Activated T-helper 2 cell treated with anti-CD3 and anti-CD28 coated beads, Interferon-gamma antibody, Interleukin-2, Interleukin-4, amounts not matched to agents 10 μg/mL and 5 μg/mL and 100 μg/mL, durations not matched to agents 14 hours and 24 hours and 36 hours (primary cell): ENCODE measurements at regions of chr11 and their contacts with region 1.

Region 1: GRCh38 chr11:95337175-95337957 is 106.4 kb upstream of the SESN3 start:
- DNase-seq: peak; percentile 46
- H3K4me3 Mint-ChIP-seq: no peak overlapping the region
- H3K27ac Mint-ChIP-seq: no peak overlapping the region
- H3K4me1 Mint-ChIP-seq: peaks cover 15% of the 10 kb centered on the region
- H3K27me3 Mint-ChIP-seq: peaks cover 2% of the 10 kb centered on the region

Region 2: DNA sequence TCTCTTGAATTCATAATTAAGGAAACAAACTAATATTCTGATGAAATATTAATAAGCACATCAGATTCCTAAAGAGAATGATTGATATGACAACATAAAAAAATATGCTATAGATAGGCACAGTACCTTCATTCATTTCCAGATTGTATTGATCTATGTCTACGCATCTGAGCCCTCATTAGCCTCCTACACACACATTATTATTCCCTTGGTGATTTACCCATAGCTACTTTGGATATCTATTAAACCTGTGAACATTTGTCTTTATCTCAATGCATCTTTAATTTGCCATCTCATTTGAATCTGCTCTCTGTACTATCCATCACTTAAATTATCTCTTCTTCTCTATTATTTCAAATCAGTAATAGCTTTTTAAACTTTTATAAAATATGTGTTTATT is 124.8 kb before region 1 on chr11:
- intact Hi-C with region 1: no loop called
- DNase-seq: no peak
- H3K4me3 Mint-ChIP-seq: no peak overlapping the region
- H3K27ac Mint-ChIP-seq: no peak overlapping the region
- H3K4me1 Mint-ChIP-seq: no peaks in the 10 kb centered on the region
- H3K27me3 Mint-ChIP-seq: no peaks in the 10 kb centered on the region

Region 3: DNA sequence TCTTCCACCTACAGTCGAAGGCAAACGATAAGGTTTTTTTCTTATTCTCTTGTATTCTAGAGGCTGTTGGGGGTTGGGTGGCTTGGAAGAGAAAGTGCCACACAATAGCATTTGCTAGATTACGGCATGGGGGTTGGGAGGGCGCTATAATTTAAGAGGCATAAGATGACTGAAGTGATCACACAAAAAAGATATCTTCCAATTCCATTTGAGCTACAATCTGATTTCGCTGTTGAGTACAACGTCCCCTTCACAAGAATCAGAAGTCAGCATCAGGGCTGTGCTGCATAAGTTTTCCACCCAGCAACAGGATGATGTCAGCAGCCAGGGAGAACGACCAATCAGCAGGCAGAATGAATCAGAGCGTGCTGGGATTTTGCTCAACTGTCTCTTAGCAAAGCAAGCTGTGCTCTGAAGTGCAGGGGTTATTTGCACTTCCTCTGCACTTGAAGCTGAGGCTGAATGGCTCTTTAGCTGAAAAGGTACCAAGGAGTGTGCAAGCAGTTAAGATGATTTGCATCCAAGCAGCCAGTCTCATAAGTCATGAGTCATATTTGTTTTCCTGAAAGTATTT is 83.1 kb before region 1 on chr11:
- intact Hi-C with region 1: loop called (anchors 5 kb)
- DNase-seq: peak; percentile 78
- H3K4me3 Mint-ChIP-seq: peak overlapping the region; percentile 68
- H3K27ac Mint-ChIP-seq: peak overlapping the region; percentile 77
- H3K4me1 Mint-ChIP-seq: peaks cover 39% of the 10 kb centered on the region
- H3K27me3 Mint-ChIP-seq: no peaks in the 10 kb centered on the region

Region 4: DNA sequence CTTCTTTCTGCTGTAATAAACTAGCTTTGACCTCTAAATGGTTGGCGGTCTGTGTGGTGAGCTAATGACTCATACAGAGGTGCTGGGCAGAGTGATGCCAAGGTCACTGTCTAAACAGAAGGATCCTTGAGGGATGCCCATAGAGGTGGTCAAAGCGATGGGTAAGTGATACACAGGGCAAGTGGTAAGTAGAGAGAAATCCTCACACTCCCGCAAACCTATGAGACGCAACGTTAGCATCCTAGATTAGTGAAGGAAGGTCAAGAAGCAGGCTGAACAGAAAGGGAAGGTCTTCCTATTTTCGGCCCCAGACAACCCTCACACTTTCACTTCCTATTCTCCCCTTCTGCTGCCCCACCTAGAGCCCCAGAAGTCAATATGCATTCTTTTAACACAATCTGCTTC is 40.7 kb before region 1 on chr11:
- intact Hi-C with region 1: loop called (anchors 5 kb)
- DNase-seq: no peak
- H3K4me3 Mint-ChIP-seq: no peak overlapping the region
- H3K27ac Mint-ChIP-seq: no peak overlapping the region
- H3K4me1 Mint-ChIP-seq: peaks cover 23% of the 10 kb centered on the region
- H3K27me3 Mint-ChIP-seq: peaks cover under 1% of the 10 kb centered on the region

Region 5: DNA sequence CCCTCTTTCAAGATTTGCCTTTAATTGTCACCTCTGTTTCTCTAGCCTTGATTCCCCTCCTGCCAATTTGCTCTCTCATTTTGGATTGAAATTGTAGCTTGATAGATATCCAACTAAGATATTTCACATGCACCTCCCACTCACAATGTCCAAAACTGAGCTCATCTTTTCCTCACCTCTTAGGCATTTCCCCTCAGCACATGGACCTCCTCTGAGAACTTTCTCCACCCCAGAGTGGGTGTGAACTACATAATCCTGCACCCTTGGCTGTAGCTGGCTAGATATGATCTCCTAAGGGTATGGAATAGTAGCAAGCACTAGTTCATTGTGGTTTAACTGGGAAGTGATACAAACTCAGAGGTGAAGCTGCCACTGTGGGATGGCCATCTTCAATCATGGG is 14.8 kb before region 1 on chr11:
- intact Hi-C with region 1: loop called (anchors 2 kb)
- DNase-seq: no peak
- H3K4me3 Mint-ChIP-seq: no peak overlapping the region
- H3K27ac Mint-ChIP-seq: peak overlapping the region; percentile 36
- H3K4me1 Mint-ChIP-seq: peaks cover 15% of the 10 kb centered on the region
- H3K27me3 Mint-ChIP-seq: peaks cover 7% of the 10 kb centered on the region

Region 6: DNA sequence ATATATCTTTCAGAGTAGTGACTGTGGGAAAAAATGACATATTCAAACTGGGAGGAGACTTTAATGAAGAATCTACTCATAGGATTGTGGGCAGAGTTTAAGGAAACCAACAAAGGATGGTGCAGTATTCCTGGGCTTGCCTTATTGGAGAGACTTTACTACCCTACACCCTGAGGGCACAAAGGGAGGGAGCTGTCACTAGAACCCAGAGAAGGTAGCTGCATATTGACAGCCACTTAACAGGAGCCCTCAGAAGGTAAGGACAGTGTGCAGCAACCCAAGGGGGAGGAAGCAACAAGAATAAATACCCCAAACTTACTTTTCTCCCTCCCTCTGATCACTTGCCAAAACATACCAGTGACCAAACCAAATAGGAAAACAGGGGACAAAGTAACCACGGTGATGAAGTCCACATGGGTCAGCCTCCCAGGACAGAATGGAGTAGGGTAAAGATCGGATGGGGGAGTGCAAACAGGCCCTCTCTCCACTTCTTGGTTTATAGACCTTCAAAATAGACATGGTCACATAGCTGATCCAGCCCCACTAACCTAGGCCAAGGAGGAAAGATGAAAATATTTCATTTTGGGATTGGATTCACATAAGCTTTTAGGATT is 15.5 kb after region 1 on chr11:
- intact Hi-C with region 1: no loop called
- DNase-seq: no peak
- H3K4me3 Mint-ChIP-seq: no peak overlapping the region
- H3K27ac Mint-ChIP-seq: no peak overlapping the region
- H3K4me1 Mint-ChIP-seq: no peaks in the 10 kb centered on the region
- H3K27me3 Mint-ChIP-seq: peaks cover 11% of the 10 kb centered on the region

Region 7: DNA sequence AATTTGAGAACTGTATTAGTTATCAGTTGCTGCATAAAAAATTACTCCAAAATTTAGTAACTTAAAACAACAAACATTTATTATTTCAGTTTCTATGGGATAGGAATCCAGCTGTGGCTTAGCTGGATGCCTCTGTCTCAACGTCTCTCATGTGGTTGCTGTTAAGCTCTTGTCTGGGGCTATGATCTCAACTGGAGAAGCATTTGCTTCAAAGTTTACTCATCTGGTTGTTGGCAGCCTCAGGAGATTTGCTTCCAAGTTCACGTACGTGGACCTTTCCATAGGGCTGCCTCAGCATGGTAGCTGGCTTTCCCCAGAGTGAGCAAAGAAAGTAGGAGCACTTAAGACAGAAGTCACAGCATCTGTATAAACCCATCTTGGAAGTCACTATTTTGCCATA is 38.5 kb after region 1 on chr11:
- intact Hi-C with region 1: no loop called
- DNase-seq: no peak
- H3K4me3 Mint-ChIP-seq: no peak overlapping the region
- H3K27ac Mint-ChIP-seq: no peak overlapping the region
- H3K4me1 Mint-ChIP-seq: peaks cover 11% of the 10 kb centered on the region
- H3K27me3 Mint-ChIP-seq: peaks cover 4% of the 10 kb centered on the region

Region 8: DNA sequence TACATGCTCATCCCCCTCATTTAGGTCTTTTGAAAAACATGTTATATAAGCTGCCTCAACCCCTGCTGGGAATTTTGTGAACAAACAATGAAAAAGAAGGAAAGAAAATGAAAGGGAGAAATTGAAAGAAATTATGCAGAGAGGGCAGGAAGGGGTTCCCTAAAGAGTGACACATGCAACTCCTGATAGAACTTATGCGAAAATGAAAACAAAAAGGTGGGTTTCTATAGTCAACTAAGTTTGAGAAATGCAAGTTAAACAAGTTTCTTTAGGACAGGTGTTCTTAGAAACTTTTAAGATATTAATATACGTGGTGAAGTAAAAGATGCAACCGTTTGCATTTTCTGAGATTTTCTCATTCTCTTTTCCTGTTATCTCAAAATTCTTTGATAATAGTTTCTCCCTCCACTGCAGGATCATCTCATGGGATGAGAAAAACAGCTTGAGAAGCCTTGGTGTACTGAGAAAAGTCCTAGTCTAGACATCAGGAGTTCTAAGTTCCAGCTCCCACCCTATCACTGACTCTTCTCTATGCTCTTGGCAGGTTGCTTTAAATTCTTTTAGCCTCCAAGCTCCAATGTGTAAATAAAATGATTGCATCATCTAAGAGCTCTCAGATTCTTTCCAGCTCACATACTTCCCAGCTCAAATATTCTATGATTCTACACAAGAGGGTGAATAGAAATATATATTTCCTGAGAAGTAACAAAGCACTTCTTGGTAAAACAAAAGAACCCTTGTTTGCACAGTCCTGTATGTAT is 343.0 kb after region 1 on chr11:
- intact Hi-C with region 1: loop called (anchors 5 kb)
- DNase-seq: no peak
- H3K4me3 Mint-ChIP-seq: no peak overlapping the region
- H3K27ac Mint-ChIP-seq: peak overlapping the region; percentile 71
- H3K4me1 Mint-ChIP-seq: peaks cover 87% of the 10 kb centered on the region
- H3K27me3 Mint-ChIP-seq: no peaks in the 10 kb centered on the region